ENCODE measurements at regions of chr7 and their contacts with region 1.

Region 1: DNA sequence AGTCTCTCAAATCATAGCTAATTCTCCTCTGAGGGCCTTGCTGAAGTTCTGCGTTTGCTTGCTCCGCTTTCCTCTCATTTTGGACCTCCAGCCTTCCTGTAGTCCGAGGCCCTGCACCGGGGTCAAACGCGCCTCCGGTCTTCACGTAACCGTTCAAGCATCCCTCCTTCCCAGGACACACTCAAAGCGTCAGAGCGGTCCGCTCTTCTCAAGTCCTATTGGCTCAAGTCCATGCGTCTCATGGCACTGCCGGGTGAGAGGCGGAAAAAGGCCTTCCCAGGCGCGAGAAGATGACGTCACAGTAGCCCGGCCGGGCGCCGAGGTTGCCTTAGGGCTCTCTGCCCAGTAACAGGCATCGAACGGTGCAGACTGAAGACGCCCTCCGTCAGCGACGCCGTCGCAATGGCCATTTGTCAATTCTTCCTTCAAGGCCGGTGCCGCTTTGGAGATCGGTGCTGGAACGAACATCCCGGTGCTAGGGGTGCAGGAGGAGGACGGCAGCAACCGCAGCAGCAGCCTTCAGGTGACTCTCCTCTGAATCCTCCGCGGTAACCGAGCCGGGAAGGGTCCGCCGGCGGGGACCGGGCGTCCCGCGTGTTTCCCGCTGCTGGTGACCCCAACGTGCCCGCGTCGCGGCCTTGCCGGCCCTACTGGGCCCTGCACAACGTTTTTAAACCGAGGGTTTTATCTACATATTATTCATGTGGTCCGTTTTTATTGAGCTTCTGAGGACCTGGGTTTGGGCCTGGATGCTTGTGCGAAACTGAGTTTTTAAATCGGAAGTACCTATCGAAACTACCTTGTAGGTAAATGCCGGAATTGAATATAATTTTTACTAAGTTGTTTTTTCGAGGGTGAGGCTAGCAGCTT is at the start of gene NUP42:
- DNase-seq: peak; percentile 99
- H3K4me3 Mint-ChIP-seq: peak within 1 kb of the TSS; percentile 94
- H3K27ac Mint-ChIP-seq: peak within 1 kb of the TSS; percentile 99
- H3K4me1 Mint-ChIP-seq: peaks cover 31% of the 10 kb centered on the region
- H3K27me3 Mint-ChIP-seq: peaks cover 7% of the 10 kb centered on the region
- total RNA-seq, gene NUP42: 51.9 and 60.9 TPM in 2 replicates

Region 2: GRCh38 chr7:22607180-22607579 is 574.7 kb before region 1 on chr7:
- intact Hi-C with region 1: no loop called
- DNase-seq: no peak
- H3K4me3 Mint-ChIP-seq: no peak overlapping the region
- H3K27ac Mint-ChIP-seq: no peak overlapping the region
- H3K4me1 Mint-ChIP-seq: no peaks in the 10 kb centered on the region
- H3K27me3 Mint-ChIP-seq: peaks cover 32% of the 10 kb centered on the region

Region 3: GRCh38 chr7:22822486-22823141 is 359.3 kb before region 1 on chr7 and contains the start of gene TOMM7:
- intact Hi-C with region 1: loop called (anchors 2 kb)
- DNase-seq: peak; percentile 95
- H3K4me3 Mint-ChIP-seq: peak within 1 kb of the TSS; percentile 99
- H3K27ac Mint-ChIP-seq: peak within 1 kb of the TSS; percentile 97
- H3K4me1 Mint-ChIP-seq: peaks cover 32% of the 10 kb centered on the region
- H3K27me3 Mint-ChIP-seq: peaks cover 25% of the 10 kb centered on the region
- total RNA-seq, gene TOMM7: 196 and 201 TPM in 2 replicates

Region 4: GRCh38 chr7:23013715-23014649 is 167.9 kb before region 1 on chr7 and contains the start of gene HYCC1:
- intact Hi-C with region 1: loop called (anchors 1 kb)
- DNase-seq: peak; percentile 100
- H3K4me3 Mint-ChIP-seq: peak within 1 kb of the TSS; percentile 92
- H3K27ac Mint-ChIP-seq: peak within 1 kb of the TSS; percentile 88
- H3K4me1 Mint-ChIP-seq: peaks cover 29% of the 10 kb centered on the region
- H3K27me3 Mint-ChIP-seq: no peaks in the 10 kb centered on the region
- total RNA-seq, gene HYCC1: 33.7 and 41.5 TPM in 2 replicates

Region 5: GRCh38 chr7:23105644-23106056 is 76.3 kb before region 1 on chr7 and contains the start of gene KLHL7:
- intact Hi-C with region 1: loop called (anchors 1 kb)
- DNase-seq: peak; percentile 99
- H3K4me3 Mint-ChIP-seq: peak within 1 kb of the TSS; percentile 97
- H3K27ac Mint-ChIP-seq: peak within 1 kb of the TSS; percentile 94
- H3K4me1 Mint-ChIP-seq: peaks cover 17% of the 10 kb centered on the region
- H3K27me3 Mint-ChIP-seq: no peaks in the 10 kb centered on the region
- total RNA-seq, gene KLHL7: 16.1 and 20.0 TPM in 2 replicates

Region 6: GRCh38 chr7:23216021-23216420 is 34.1 kb after region 1 on chr7:
- intact Hi-C with region 1: no loop called
- DNase-seq: no peak
- H3K4me3 Mint-ChIP-seq: no peak overlapping the region
- H3K27ac Mint-ChIP-seq: no peak overlapping the region
- H3K4me1 Mint-ChIP-seq: no peaks in the 10 kb centered on the region
- H3K27me3 Mint-ChIP-seq: peaks cover 13% of the 10 kb centered on the region

Region 7: GRCh38 chr7:23474094-23474828 is 292.3 kb after region 1 on chr7:
- intact Hi-C with region 1: loop called (anchors 5 kb)
- DNase-seq: peak; percentile 96
- H3K4me3 Mint-ChIP-seq: peak overlapping the region; percentile 84
- H3K27ac Mint-ChIP-seq: peak overlapping the region; percentile 75
- H3K4me1 Mint-ChIP-seq: peaks cover 27% of the 10 kb centered on the region
- H3K27me3 Mint-ChIP-seq: peaks cover 60% of the 10 kb centered on the region

Measured in activated CD4-positive, alpha-beta T cell treated with anti-CD3 and anti-CD28 coated beads, Interleukin-2, amount 10 ng/mL, durations not matched to agents 24 days and 14 days (primary cell).